Psoas muscle (tissue), 8 donors: ENCODE measurements at regions of chr3 and their contacts with region 1.

Region 1: DNA sequence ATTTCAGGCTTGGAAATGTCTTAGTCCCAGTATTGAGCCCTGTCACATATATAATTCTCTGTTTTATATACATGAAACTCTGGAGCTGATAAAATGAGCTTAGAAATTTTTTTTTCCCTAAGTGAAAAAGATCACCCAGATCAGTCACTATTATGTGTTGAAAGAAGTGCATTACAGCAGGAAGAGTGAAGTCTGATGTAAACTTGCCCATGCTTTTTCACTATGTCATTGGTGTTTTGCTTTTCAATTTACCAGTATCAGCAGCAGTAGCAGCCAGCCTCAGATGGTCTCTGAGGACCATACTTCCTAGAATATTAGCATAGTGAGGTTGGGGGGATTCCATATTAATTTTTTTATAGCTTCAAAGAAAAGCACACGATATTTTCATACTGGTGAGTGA is 255.6 kb upstream of the KCNH8 start:
- DNase-seq: no peak
- ATAC-seq: no peak
- H3K4me3 ChIP-seq: no peak overlapping the region
- H3K27ac ChIP-seq: no peak overlapping the region
- H3K4me1 ChIP-seq: no peaks in the 10 kb centered on the region
- H3K27me3 ChIP-seq: no peaks in the 10 kb centered on the region
- CTCF ChIP-seq: no peak

Region 2: GRCh38 chr3:18919158-18919557 is 26.4 kb after region 1 on chr3:
- intact Hi-C with region 1: loop called in 1 of 2 experiments (anchors 1 kb)
- DNase-seq: no peak
- ATAC-seq: no peak
- H3K4me3 ChIP-seq: no peak overlapping the region
- H3K27ac ChIP-seq: no peak overlapping the region
- H3K4me1 ChIP-seq: no peaks in the 10 kb centered on the region
- H3K27me3 ChIP-seq: no peaks in the 10 kb centered on the region
- CTCF ChIP-seq: no peak

Region 3: GRCh38 chr3:19394943-19395342 is 502.2 kb after region 1 on chr3:
- intact Hi-C with region 1: no loop called
- DNase-seq: no peak
- ATAC-seq: no peak
- H3K4me3 ChIP-seq: no peak overlapping the region
- H3K27ac ChIP-seq: no peak overlapping the region
- H3K4me1 ChIP-seq: no peaks in the 10 kb centered on the region
- H3K27me3 ChIP-seq: no peaks in the 10 kb centered on the region
- CTCF ChIP-seq: no peak